Esophagus squamous epithelium (tissue), 5 donors: ENCODE measurements at regions of chr1 and their contacts with region 1.

Region 1: GRCh38 chr1:24847995-24848881 is 81.8 kb downstream of the RUNX3 start:
- DNase-seq: peak; percentile 83
- H3K4me3 ChIP-seq: peak overlapping the region; percentile 30 to 71 (median 52)
- H3K27ac ChIP-seq: peak overlapping the region; percentile 55 to 87 (median 72)
- H3K4me1 ChIP-seq: peaks cover 6 to 23% (median 9%) of the 10 kb centered on the region in 3 donors
- H3K27me3 ChIP-seq: peaks cover 0 to 18% (median 0%) of the 10 kb centered on the region in 4 donors
- CTCF ChIP-seq: peak; percentile 90 to 96 (median 93)
- POLR2A ChIP-seq: peak in 1 of 4 donors; percentile 37

Region 2: GRCh38 chr1:24744911-24745710 is 103.1 kb before region 1 on chr1 and contains the start of gene CLIC4:
- intact Hi-C with region 1: no loop called
- DNase-seq: peak; percentile 92
- H3K4me3 ChIP-seq: peak within 1 kb of the TSS; percentile 81 to 99 (median 90)
- H3K27ac ChIP-seq: peak within 1 kb of the TSS; percentile 95 to 98 (median 97)
- H3K4me1 ChIP-seq: peaks cover 9 to 62% (median 20%) of the 10 kb centered on the region in 3 donors
- H3K27me3 ChIP-seq: no peaks in the 10 kb centered on the region
- CTCF ChIP-seq: peak in 4 of 6 experiments; percentile 19 to 67 (median 32)
- POLR2A ChIP-seq: peak in 3 of 4 donors; percentile 84 to 99 (median 96)
- total RNA-seq, gene CLIC4: 22.3 to 204 (median 69.0) TPM

Region 3: DNA sequence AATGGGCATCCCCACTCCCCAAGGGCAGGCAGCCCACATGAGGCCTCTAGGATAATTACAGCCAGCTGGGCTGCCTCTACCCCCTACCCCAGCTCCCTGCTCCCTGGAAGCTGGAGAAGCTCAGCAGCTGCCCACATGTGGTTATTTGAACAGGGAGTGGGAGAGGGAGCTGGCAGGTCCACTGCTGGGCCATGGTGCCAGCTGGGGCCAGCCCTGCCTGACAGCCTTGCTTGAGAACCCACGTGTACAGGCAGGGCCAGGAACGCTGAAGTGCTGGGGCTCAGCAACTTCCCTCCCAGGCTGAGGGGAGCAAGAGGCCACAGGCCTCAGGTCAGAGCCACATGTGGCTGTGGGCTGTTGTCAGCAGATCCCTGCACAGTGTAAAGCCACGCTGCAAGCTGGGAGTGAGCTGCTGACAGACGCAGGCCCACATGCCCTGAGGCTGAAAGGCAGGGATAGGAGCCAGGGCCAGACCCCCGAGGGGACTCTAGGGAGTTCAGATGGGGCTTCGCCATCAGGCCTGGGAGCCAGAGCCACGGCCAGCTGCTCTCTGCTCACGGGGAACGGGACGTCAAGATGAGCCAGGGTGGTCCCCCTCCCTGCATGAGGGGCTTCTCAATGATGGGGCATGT is 255.0 kb after region 1 on chr1:
- intact Hi-C with region 1: loop called (anchors 5 kb)
- DNase-seq: no peak
- H3K4me3 ChIP-seq: no peak overlapping the region
- H3K27ac ChIP-seq: no peak overlapping the region
- H3K4me1 ChIP-seq: peaks cover 0 to 8% (median 0%) of the 10 kb centered on the region in 3 donors
- H3K27me3 ChIP-seq: peaks cover 0 to 77% (median 0%) of the 10 kb centered on the region in 4 donors
- CTCF ChIP-seq: no peak
- POLR2A ChIP-seq: no peak

Region 4: DNA sequence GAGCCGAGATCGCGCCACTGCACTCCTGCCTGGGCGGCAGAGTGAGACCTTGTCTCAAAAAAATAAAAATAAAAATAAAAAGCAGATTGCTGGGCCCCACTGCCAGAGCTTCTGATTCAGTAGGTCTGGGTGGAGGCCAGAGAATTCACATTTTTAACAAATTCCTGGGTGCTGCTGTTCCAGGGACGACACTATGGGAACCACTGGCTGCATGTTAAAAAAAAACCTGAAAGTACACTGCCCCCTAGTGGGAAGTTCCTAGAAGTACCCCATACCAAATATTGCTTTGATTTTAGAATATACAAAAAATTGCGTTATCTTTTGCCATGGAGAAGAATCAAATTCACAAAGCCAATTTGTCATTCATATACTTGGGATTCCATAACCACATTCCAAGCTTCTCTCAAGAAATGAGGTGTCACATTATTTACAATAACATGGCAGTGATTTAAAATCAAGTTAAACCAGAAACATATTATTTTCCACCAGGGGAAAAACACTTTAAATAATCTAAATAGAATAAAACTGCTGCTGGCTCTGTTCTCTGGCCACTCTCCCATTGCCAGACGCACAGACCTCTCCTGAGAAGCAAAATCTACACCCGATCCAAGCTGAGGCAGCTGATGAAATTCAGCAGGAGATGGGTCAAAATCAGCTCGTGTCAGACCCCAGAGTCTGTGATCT is 356.7 kb after region 1 on chr1:
- intact Hi-C with region 1: loop called (anchors 5 kb)
- DNase-seq: no peak
- H3K4me3 ChIP-seq: no peak overlapping the region
- H3K27ac ChIP-seq: no peak overlapping the region
- H3K4me1 ChIP-seq: no peaks in the 10 kb centered on the region
- H3K27me3 ChIP-seq: peaks cover 0 to 22% (median 0%) of the 10 kb centered on the region in 4 donors
- CTCF ChIP-seq: peak; percentile 51 to 82 (median 65)
- POLR2A ChIP-seq: no peak